CD14-positive monocyte (primary cell): ENCODE measurements at regions of chr1 and their contacts with region 1.

Region 1: GRCh38 chr1:111955755-111956154 is 33.7 kb downstream of the KCND3 start:
- DNase-seq: no peak
- H3K4me3 ChIP-seq: no peak overlapping the region
- H3K4me3 Mint-ChIP-seq: no peak overlapping the region
- H3K27ac ChIP-seq: no peak overlapping the region
- H3K27ac Mint-ChIP-seq: no peak overlapping the region
- H3K4me1 ChIP-seq: no peaks in the 10 kb centered on the region
- H3K4me1 Mint-ChIP-seq: no peaks in the 10 kb centered on the region
- H3K27me3 ChIP-seq: peaks cover 0 to 4% of the 10 kb centered on the region in 2 donors
- H3K27me3 Mint-ChIP-seq: peaks cover 3 to 17% (median 6%) of the 10 kb centered on the region in 3 donors
- CTCF ChIP-seq: no peak

Region 2: GRCh38 chr1:111690306-111690617 is 265.5 kb before region 1 on chr1:
- intact Hi-C with region 1: no loop called
- DNase-seq: no peak
- H3K4me3 ChIP-seq: no peak overlapping the region
- H3K4me3 Mint-ChIP-seq: no peak overlapping the region
- H3K27ac ChIP-seq: peak overlapping the region in 1 of 2 donors; percentile 50
- H3K27ac Mint-ChIP-seq: peak overlapping the region in 3 of 7 donors; percentile 59 to 73 (median 66)
- H3K4me1 ChIP-seq: peaks cover 0 to 5% of the 10 kb centered on the region in 2 donors
- H3K4me1 Mint-ChIP-seq: peaks cover 30% of the 10 kb centered on the region
- H3K27me3 ChIP-seq: no peaks in the 10 kb centered on the region
- H3K27me3 Mint-ChIP-seq: no peaks in the 10 kb centered on the region
- CTCF ChIP-seq: no peak

Region 3: DNA sequence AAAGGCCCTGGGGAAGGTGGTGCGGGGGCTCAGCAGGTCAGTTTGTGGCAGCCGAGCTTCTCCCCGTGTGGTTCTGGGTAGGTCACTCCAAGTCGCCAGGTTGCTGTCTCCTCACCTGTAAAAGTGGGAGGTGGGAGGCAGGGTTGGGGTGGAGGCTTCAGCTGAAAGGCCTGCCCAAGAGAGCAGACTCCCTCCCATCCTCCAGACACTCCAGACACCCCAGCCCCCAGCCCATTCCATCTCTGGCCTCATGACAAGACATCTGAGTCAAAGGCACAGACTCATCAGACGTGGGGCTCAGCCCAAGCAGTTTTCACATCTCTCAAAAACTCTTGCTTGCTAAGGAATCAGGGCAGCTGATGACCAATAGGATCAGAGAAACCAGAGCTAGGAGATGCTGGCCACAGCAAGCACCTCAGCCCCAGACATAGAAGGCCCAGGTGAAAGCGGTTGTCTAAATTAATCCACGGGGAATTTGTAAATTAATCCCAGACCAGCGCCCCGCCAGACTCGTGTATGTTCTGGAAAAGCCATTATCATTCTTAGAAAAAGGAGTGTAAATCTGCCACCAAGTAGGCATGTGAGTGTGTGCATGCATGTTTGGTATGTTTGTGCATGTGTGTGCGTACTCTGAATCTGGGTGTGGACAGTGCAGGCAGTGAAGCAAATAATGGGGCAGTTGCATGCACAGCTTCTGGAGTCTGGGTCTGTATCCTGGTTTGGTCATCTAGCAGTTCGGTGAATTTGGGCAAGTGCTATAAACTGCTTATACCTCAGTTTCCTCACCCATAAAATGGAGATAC is 21.5 kb before region 1 on chr1:
- intact Hi-C with region 1: loop called in 1 of 2 experiments (anchors 2 kb)
- DNase-seq: no peak
- H3K4me3 ChIP-seq: no peak overlapping the region
- H3K4me3 Mint-ChIP-seq: no peak overlapping the region
- H3K27ac ChIP-seq: no peak overlapping the region
- H3K27ac Mint-ChIP-seq: no peak overlapping the region
- H3K4me1 ChIP-seq: no peaks in the 10 kb centered on the region
- H3K4me1 Mint-ChIP-seq: no peaks in the 10 kb centered on the region
- H3K27me3 ChIP-seq: no peaks in the 10 kb centered on the region
- H3K27me3 Mint-ChIP-seq: peaks cover 4 to 6% (median 4%) of the 10 kb centered on the region in 3 donors
- CTCF ChIP-seq: no peak